CD8-positive, alpha-beta memory T cell (primary cell): ENCODE measurements at regions of chr2 and their contacts with region 1.

Region 1: DNA sequence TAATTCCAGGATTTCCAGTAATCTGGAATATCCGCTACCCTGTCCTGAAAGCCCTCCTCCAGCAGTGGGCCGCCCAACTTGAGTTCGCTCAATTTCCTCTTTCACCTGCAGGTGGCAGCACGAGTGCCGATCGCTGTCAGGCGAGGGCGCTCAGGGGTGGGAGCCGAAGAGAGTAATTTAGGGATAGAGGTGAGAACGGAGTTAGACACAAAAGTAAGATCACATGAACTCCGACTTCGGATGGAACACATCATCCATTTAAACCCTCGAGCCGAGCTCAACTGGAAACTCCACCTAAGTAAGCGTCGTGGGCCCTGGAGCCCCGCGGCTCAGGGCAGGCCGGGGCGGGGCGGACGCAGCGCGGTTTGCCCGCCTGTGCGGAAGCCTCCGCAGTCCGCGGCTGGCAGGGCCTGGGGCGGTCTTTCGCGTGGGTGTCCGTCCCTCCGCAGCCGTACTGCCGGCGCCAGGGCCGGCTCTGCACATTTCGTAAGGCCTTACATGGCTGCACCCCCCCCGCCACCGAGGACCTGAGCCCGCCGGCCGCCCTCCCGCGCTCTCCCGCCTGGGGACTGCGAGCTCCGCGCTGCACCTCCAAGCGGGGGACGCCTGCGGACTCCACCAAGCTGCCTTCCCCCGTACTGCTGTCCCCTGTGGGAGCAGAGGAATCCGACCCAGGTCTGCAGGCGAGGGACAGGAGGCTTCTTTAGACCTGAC is 61.2 kb downstream of the SEMA4F start:
- DNase-seq: peak; percentile 65 to 81 (median 68)
- H3K4me3 ChIP-seq: peak overlapping the region; percentile 79
- H3K4me3 Mint-ChIP-seq: peak overlapping the region; percentile 73 to 92 (median 85)
- H3K27ac ChIP-seq: no peak overlapping the region
- H3K27ac Mint-ChIP-seq: peak overlapping the region in 4 of 8 donors; percentile 2 to 46 (median 28)
- H3K4me1 ChIP-seq: peaks cover 6% of the 10 kb centered on the region
- H3K4me1 Mint-ChIP-seq: peaks cover 6 to 9% (median 9%) of the 10 kb centered on the region in 3 donors
- H3K27me3 ChIP-seq: peaks cover 18% of the 10 kb centered on the region
- H3K27me3 Mint-ChIP-seq: peaks cover 0 to 16% of the 10 kb centered on the region in 2 donors

Region 2: DNA sequence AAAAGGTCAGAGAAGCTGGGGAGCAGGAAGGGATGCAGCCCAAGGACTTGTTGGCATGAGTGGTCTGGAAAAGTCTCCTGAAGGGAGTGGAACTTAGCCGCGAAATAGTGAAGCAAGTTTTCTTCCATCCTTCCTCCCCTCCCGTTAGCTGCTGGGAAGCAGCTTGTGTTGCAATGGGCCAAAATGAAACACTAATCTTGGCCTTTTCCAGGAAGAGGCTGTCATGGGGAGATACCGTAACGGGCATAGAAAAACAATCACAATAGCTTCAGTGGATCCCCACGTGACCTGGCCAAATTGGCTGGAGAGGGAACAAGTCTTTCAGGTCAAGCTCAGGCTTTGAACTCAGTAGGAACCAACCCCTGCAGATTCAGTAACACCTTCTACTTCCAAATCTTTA is 11.9 kb before region 1 on chr2:
- CTCF ChIA-PET with region 1: interaction called, 28 read pairs
- POLR2A ChIA-PET with region 1: no interaction called
- DNase-seq: no peak
- H3K4me3 ChIP-seq: no peak overlapping the region
- H3K4me3 Mint-ChIP-seq: no peak overlapping the region
- H3K27ac ChIP-seq: no peak overlapping the region
- H3K27ac Mint-ChIP-seq: no peak overlapping the region
- H3K4me1 ChIP-seq: no peaks in the 10 kb centered on the region
- H3K4me1 Mint-ChIP-seq: no peaks in the 10 kb centered on the region
- H3K27me3 ChIP-seq: no peaks in the 10 kb centered on the region
- H3K27me3 Mint-ChIP-seq: peaks cover 0 to 2% of the 10 kb centered on the region in 2 donors

Region 3: GRCh38 chr2:74778381-74779264 is 63.4 kb after region 1 on chr2:
- CTCF ChIA-PET with region 1: no interaction called
- POLR2A ChIA-PET with region 1: no interaction called
- DNase-seq: no peak
- H3K4me3 ChIP-seq: no peak overlapping the region
- H3K4me3 Mint-ChIP-seq: no peak overlapping the region
- H3K27ac ChIP-seq: no peak overlapping the region
- H3K27ac Mint-ChIP-seq: peak overlapping the region in 4 of 8 donors; percentile 8 to 82 (median 50)
- H3K4me1 ChIP-seq: no peaks in the 10 kb centered on the region
- H3K4me1 Mint-ChIP-seq: peaks cover 13 to 14% (median 13%) of the 10 kb centered on the region in 3 donors
- H3K27me3 ChIP-seq: no peaks in the 10 kb centered on the region
- H3K27me3 Mint-ChIP-seq: no peaks in the 10 kb centered on the region

Region 4: DNA sequence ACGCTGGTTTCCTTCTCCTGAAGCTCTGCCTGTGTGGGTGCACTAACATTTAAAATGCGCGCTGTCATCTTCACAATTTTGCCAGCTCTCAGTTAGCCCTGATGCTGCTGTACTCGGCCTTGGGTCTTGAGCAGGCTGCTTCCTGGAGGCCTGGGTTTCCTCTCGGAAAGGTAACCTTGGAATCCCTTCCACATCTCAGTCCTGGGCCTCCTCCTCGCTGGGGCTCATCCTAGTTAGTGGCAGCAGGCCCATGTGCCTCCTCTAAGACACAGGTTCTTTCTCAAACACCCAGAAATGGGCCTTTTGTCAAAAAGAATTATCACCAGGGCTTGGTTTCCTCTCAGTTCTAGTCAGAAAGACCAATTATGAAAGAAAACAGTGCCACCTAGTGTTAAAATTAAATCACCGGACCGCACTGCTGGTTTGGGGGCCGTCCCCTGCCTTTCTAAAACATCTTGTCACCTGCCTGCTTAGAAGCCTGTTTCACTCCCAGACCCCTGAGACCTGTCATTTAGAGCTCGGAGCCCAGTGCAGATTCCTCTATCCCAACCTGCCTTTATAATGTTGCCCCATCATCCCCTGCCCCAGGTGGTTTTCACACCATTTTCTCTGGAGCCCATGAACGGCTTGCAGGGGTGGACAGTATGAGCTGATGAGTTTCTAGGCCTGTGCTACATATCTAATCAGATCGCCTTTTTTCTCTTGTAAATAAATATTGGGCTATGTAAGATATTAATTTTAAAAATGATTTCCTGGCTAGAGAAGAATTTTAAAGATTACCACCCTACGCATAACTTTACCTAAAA is 161.0 kb after region 1 on chr2:
- CTCF ChIA-PET with region 1: interaction called, 145 read pairs
- POLR2A ChIA-PET with region 1: no interaction called
- DNase-seq: peak; percentile 7 to 69 (median 54)
- H3K4me3 ChIP-seq: no peak overlapping the region
- H3K4me3 Mint-ChIP-seq: no peak overlapping the region
- H3K27ac ChIP-seq: no peak overlapping the region
- H3K27ac Mint-ChIP-seq: peak overlapping the region in 1 of 8 donors; percentile 33
- H3K4me1 ChIP-seq: peaks cover 4% of the 10 kb centered on the region
- H3K4me1 Mint-ChIP-seq: peaks cover 0 to 5% (median 0%) of the 10 kb centered on the region in 3 donors
- H3K27me3 ChIP-seq: no peaks in the 10 kb centered on the region
- H3K27me3 Mint-ChIP-seq: no peaks in the 10 kb centered on the region